Activated CD4-positive, alpha-beta T cell treated with anti-CD3 and anti-CD28 coated beads, Interleukin-2, amount 10 ng/mL, durations not matched to agents 24 days and 14 days (primary cell): ENCODE measurements at regions of chr5 and their contacts with region 1.

Region 1: GRCh38 chr5:131209506-131210150 is 38.9 kb downstream of the LYRM7 start:
- DNase-seq: peak; percentile 87
- H3K4me3 Mint-ChIP-seq: peak overlapping the region; percentile 82
- H3K27ac Mint-ChIP-seq: peak overlapping the region; percentile 94
- H3K4me1 Mint-ChIP-seq: peaks cover 47% of the 10 kb centered on the region
- H3K27me3 Mint-ChIP-seq: no peaks in the 10 kb centered on the region

Region 2: GRCh38 chr5:131170540-131171275 is 38.9 kb before region 1 on chr5 and contains the start of gene LYRM7:
- intact Hi-C with region 1: loop called (anchors 2 kb)
- DNase-seq: peak; percentile 99
- H3K4me3 Mint-ChIP-seq: peak within 1 kb of the TSS; percentile 100
- H3K27ac Mint-ChIP-seq: peak within 1 kb of the TSS; percentile 97
- H3K4me1 Mint-ChIP-seq: peaks cover 45% of the 10 kb centered on the region
- H3K27me3 Mint-ChIP-seq: no peaks in the 10 kb centered on the region
- total RNA-seq, gene LYRM7: 17.9 and 18.1 TPM in 2 replicates

Region 3: GRCh38 chr5:131224387-131225201 is 15.0 kb after region 1 on chr5:
- intact Hi-C with region 1: loop called (anchors 2 kb)
- DNase-seq: peak; percentile 59
- H3K4me3 Mint-ChIP-seq: no peak overlapping the region
- H3K27ac Mint-ChIP-seq: no peak overlapping the region
- H3K4me1 Mint-ChIP-seq: peaks cover 5% of the 10 kb centered on the region
- H3K27me3 Mint-ChIP-seq: no peaks in the 10 kb centered on the region

Region 4: GRCh38 chr5:131242728-131243255 is 33.2 kb after region 1 on chr5:
- intact Hi-C with region 1: loop called (anchors 2 kb)
- DNase-seq: no peak
- H3K4me3 Mint-ChIP-seq: no peak overlapping the region
- H3K27ac Mint-ChIP-seq: no peak overlapping the region
- H3K4me1 Mint-ChIP-seq: peaks cover 7% of the 10 kb centered on the region
- H3K27me3 Mint-ChIP-seq: no peaks in the 10 kb centered on the region

Region 5: DNA sequence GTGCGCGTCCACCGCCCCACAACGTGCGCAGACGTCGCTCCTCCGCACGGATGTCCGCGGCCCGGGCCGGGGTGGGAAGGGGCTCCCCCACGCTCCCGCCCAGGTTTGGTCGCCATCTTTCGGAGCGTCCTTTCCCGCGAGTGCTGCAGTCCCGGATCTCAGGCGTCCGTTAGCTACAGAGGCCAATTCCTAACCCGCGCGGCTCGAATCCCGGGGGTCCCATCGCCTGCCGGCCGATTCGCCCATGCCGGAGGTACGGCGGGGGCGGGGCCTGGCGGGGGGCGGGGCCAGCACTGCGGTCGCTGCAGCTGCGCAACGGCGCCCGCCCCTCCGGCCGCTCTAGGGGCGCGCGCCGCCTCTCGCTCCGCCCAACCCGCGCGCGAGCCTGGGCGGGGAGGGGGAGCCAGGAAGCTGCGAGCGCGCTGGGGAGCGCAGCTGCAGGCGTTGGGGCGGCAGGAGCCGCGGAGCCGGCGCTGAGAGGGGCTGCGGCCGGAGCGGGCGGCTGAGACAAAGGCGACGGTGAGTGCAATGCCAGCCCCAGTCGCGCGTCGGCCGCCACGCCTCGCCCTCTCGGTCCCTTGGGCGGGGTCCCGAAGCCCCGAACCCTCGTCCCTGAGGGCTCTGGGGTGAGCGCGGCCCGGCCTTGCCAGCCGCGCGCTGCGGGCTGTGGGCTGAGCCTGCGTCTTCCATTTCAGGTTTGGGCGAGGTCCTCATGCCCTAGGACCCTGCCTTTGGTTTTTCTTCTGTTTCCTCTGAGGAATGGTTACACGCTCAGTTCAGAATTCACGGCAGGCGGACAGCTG is 54.2 kb after region 1 on chr5 and contains the start of gene CDC42SE2:
- intact Hi-C with region 1: no loop called
- DNase-seq: peak; percentile 97
- H3K4me3 Mint-ChIP-seq: peak within 1 kb of the TSS; percentile 85
- H3K27ac Mint-ChIP-seq: peak within 1 kb of the TSS; percentile 93
- H3K4me1 Mint-ChIP-seq: peaks cover 34% of the 10 kb centered on the region
- H3K27me3 Mint-ChIP-seq: no peaks in the 10 kb centered on the region
- total RNA-seq, gene CDC42SE2: 96.2 and 99.0 TPM in 2 replicates

Region 6: GRCh38 chr5:131659290-131659689 is 449.7 kb after region 1 on chr5:
- intact Hi-C with region 1: no loop called
- DNase-seq: no peak
- H3K4me3 Mint-ChIP-seq: no peak overlapping the region
- H3K27ac Mint-ChIP-seq: no peak overlapping the region
- H3K4me1 Mint-ChIP-seq: peaks cover 6% of the 10 kb centered on the region
- H3K27me3 Mint-ChIP-seq: no peaks in the 10 kb centered on the region